Endothelial cell of umbilical vein (primary cell): ENCODE measurements at regions of chr17 and their contacts with region 1.

Region 1: DNA sequence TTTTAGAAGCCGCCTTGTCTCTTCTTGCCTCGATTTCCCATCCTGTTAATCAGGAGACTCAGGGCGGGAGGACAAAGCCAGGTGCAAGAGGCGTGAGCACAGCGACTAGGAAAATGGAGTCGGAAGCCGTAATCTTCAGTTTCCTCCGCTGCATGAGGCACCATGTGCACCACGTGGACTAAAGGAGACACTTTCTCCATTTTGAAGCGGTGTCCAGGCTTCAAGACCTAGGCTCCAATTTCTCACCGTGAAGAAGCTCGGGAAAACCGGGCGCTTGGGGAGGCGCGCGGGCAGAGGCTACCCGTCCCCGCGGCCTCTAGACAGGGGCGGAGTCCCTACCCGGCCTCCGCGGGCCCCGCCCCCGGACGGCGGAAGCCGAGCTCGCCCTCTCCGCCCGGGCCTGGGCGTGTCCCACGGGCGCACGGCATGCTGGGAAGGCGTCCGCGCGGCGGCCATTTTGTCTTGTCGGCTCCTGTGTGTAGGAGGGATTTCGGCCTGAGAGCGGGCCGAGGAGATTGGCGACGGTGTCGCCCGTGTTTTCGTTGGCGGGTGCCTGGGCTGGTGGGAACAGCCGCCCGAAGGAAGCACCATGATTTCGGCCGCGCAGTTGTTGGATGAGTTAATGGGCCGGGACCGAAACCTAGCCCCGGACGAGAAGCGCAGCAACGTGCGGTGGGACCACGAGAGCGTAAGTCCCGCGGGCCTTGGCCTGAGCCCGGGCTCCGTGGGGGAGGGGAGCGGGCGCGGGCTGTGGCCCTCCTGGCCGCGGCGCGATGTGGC is at the start of gene LUC7L3:
- DNase-seq: peak; percentile 96
- H3K4me3 ChIP-seq: peak within 1 kb of the TSS; percentile 70 to 98 (median 90)
- H3K27ac ChIP-seq: peak within 1 kb of the TSS; percentile 94
- H3K4me1 ChIP-seq: peaks cover 22% of the 10 kb centered on the region
- H3K27me3 ChIP-seq: no peaks in the 10 kb centered on the region
- CTCF ChIP-seq: no peak
- POLR2A ChIP-seq: peak; percentile 87
- total RNA-seq, gene LUC7L3: 111 and 113 TPM in 2 replicates

Region 2: GRCh38 chr17:50668025-50668837 is 51.1 kb before region 1 on chr17:
- CTCF ChIA-PET with region 1: no interaction called
- POLR2A ChIA-PET with region 1: no interaction called
- dilution Hi-C with region 1: no loop called
- intact Hi-C with region 1: no loop called
- DNase-seq: peak; percentile 49
- H3K4me3 ChIP-seq: no peak overlapping the region
- H3K27ac ChIP-seq: peak overlapping the region; percentile 50
- H3K4me1 ChIP-seq: peaks cover 14% of the 10 kb centered on the region
- H3K27me3 ChIP-seq: no peaks in the 10 kb centered on the region
- CTCF ChIP-seq: no peak
- POLR2A ChIP-seq: peak; percentile 30

Region 3: GRCh38 chr17:50707289-50708049 is 11.9 kb before region 1 on chr17 and contains the start of gene ANKRD40:
- CTCF ChIA-PET with region 1: interaction called, 9 read pairs
- POLR2A ChIA-PET with region 1: interaction called, 7 read pairs
- dilution Hi-C with region 1: no loop called
- intact Hi-C with region 1: loop called (anchors 1 kb)
- DNase-seq: peak; percentile 93
- H3K4me3 ChIP-seq: peak within 1 kb of the TSS; percentile 37 to 93 (median 88)
- H3K27ac ChIP-seq: peak within 1 kb of the TSS; percentile 88
- H3K4me1 ChIP-seq: peaks cover 17% of the 10 kb centered on the region
- H3K27me3 ChIP-seq: peaks cover 2 to 4% of the 10 kb centered on the region in 2 experiments
- CTCF ChIP-seq: no peak
- POLR2A ChIP-seq: peak; percentile 78
- total RNA-seq, gene ANKRD40: 55.0 and 56.0 TPM in 2 replicates

Region 4: DNA sequence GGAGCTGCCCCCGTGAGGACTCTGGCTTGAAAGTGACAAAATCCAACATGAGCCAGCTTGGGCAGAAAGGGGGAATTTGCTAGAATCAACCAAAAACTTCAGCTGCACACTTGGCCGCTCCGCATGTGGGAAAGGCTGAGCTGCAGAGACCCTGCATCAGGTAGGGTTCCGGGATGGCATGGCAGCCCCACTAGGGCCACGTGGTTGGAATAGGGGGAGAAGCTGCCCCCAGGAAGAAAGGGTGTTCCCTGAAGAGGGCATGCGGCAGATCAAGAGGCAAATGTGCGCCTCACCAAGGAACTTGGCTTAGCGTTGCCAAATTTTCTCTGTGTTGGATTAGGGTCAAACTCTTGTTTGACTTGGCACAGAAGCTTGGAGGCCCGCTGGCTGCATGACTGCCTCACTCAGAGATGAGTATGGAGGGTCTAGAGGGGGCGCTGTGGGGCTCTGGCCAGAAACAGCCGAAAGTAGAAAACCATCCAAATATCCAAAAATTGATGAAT is 86.9 kb after region 1 on chr17:
- CTCF ChIA-PET with region 1: no interaction called
- POLR2A ChIA-PET with region 1: no interaction called
- dilution Hi-C with region 1: no loop called
- intact Hi-C with region 1: no loop called
- DNase-seq: no peak
- H3K4me3 ChIP-seq: no peak overlapping the region
- H3K27ac ChIP-seq: no peak overlapping the region
- H3K4me1 ChIP-seq: no peaks in the 10 kb centered on the region
- H3K27me3 ChIP-seq: peaks cover 0 to 2% of the 10 kb centered on the region in 2 experiments
- CTCF ChIP-seq: no peak
- POLR2A ChIP-seq: no peak